ENCODE measurements at regions of chr2 and their contacts with region 1.

Region 1: GRCh38 chr2:69770193-69771146 is 28.5 kb downstream of the ANXA4 start:
- DNase-seq: peak; percentile 11
- H3K4me3 ChIP-seq: no peak overlapping the region
- H3K27ac ChIP-seq: no peak overlapping the region
- H3K4me1 ChIP-seq: no peaks in the 10 kb centered on the region
- H3K27me3 ChIP-seq: no peaks in the 10 kb centered on the region
- CTCF ChIP-seq: no peak

Region 2: DNA sequence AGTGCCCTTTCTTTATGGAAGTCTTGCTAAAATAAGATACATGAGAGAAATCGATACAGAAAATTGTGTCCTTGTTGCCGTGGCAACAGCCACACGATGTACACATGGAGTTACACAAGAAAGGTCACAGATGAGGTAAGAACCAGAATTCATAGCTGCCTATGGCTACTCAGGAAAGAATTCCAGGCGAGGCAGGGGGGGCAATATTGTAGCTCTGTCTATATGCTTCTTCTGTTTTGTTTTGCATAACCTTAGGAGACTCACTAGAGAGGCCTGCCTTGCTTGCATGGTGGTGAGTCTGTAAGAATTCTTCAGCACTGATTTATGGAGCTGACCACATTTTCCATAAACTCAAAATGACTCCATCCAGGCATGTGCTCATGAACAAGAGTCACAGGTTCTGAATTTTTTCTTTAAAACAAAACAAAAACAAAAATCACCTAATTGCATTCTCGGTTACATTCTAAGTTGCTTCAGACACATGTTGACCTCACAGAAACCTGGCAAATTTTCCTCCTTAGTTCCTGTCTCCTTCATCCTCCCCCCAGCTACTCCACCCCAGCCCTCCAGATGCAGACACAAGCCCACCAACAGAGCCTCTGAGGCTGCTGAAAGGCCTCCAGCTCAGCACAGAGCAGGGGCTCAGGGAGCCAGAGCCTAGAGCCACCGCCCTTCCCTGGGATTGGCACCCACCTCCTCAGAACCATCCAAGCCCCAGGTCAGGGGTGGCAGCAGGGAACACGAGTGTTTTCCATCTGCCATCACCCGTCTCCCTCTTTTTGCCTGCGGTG is 573.9 kb before region 1 on chr2:
- CTCF ChIA-PET with region 1: no interaction called
- POLR2A ChIA-PET with region 1: interaction called, 16 read pairs
- intact Hi-C with region 1: no loop called
- DNase-seq: no peak
- H3K4me3 ChIP-seq: no peak overlapping the region
- H3K27ac ChIP-seq: no peak overlapping the region
- H3K4me1 ChIP-seq: no peaks in the 10 kb centered on the region
- H3K27me3 ChIP-seq: no peaks in the 10 kb centered on the region
- CTCF ChIP-seq: no peak

Region 3: DNA sequence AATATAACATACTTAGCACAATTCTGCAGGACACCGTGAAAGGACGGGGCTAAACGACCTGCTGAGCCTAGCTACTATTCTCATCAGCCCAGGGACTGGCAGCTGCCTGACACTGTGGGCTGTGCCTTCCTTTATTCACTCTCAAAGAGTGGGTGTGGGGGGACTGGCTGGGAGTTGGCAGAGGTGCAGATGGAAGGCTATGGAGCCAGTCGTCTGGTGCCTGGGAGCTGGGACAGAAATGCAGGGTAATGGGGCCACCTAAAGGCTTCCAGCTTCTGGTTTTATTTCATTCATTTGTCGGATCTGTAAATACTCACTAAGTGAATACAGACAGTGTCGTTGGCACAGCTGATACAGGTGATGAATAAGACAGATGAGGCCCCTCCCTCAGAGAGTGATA is 277.2 kb before region 1 on chr2:
- CTCF ChIA-PET with region 1: no interaction called
- POLR2A ChIA-PET with region 1: interaction called, 14 read pairs
- intact Hi-C with region 1: no loop called
- DNase-seq: peak; percentile 15
- H3K4me3 ChIP-seq: no peak overlapping the region
- H3K27ac ChIP-seq: no peak overlapping the region
- H3K4me1 ChIP-seq: no peaks in the 10 kb centered on the region
- H3K27me3 ChIP-seq: no peaks in the 10 kb centered on the region
- CTCF ChIP-seq: 0 out of 2 replicates have a peak, but pooled peaks have one; percentile 9

Measured in A673 (cell line).